CD8-positive, alpha-beta T cell (primary cell): ENCODE measurements at regions of chr6 and their contacts with region 1.

Region 1: DNA sequence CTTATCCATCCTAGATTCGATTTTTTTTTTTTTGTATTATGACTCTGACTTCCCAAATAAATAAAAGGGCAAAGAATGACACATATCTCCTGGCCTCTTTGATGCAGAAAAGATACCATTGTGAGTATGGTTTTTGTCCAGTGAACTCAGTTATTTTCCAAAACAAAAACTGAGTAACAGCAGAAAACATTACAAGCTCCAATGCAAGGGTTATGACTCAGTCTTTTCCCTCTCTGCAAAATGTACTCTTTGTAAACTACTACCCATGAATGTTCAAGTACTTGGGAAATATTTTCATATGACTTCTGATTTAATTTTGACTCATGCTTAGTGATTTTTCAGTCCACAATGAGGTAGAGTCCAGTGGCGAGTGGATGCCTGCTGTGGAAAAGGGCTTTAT is 355.3 kb downstream of the RNF144B start:
- DNase-seq: no peak
- ATAC-seq: no peak
- H3K4me3 ChIP-seq: no peak overlapping the region
- H3K4me3 Mint-ChIP-seq: no peak overlapping the region
- H3K27ac ChIP-seq: no peak overlapping the region
- H3K27ac Mint-ChIP-seq: no peak overlapping the region
- H3K4me1 ChIP-seq: no peaks in the 10 kb centered on the region
- H3K4me1 Mint-ChIP-seq: no peaks in the 10 kb centered on the region
- H3K27me3 ChIP-seq: no peaks in the 10 kb centered on the region
- H3K27me3 Mint-ChIP-seq: no peaks in the 10 kb centered on the region
- CTCF ChIP-seq: no peak

Region 2: GRCh38 chr6:18277237-18278006 is 465.0 kb before region 1 on chr6:
- CTCF ChIA-PET with region 1: no interaction called
- POLR2A ChIA-PET with region 1: no interaction called
- intact Hi-C with region 1: no loop called
- DNase-seq: no peak
- ATAC-seq: no peak
- H3K4me3 ChIP-seq: no peak overlapping the region
- H3K4me3 Mint-ChIP-seq: no peak overlapping the region
- H3K27ac ChIP-seq: no peak overlapping the region
- H3K27ac Mint-ChIP-seq: no peak overlapping the region
- H3K4me1 ChIP-seq: no peaks in the 10 kb centered on the region
- H3K4me1 Mint-ChIP-seq: peaks cover 7% of the 10 kb centered on the region
- H3K27me3 ChIP-seq: peaks cover 5 to 22% of the 10 kb centered on the region in 2 experiments
- H3K27me3 Mint-ChIP-seq: peaks cover 49% of the 10 kb centered on the region
- CTCF ChIP-seq: no peak

Region 3: DNA sequence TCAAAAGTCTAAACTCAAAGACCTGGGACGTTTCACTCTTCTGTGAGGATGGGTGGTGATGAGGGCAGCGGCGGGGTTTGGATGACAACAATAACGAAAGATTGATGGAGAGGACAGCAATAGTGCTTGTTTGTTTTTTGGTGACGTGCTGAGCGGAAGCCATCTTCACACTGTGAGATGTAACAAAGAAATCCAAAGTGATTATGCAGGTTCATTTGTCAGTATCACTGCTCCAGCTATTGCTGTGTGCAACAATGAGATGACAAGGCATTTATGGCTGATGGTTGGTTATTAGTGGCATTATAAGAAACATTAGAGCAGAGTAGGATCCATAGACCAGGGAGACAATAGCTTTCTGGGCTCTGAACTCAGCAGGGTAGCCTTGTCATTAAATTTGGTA is 48.5 kb before region 1 on chr6:
- CTCF ChIA-PET with region 1: no interaction called
- POLR2A ChIA-PET with region 1: no interaction called
- intact Hi-C with region 1: loop called in 1 of 2 experiments (anchors 2 kb)
- DNase-seq: no peak
- ATAC-seq: no peak
- H3K4me3 ChIP-seq: no peak overlapping the region
- H3K4me3 Mint-ChIP-seq: no peak overlapping the region
- H3K27ac ChIP-seq: no peak overlapping the region
- H3K27ac Mint-ChIP-seq: no peak overlapping the region
- H3K4me1 ChIP-seq: no peaks in the 10 kb centered on the region
- H3K4me1 Mint-ChIP-seq: no peaks in the 10 kb centered on the region
- H3K27me3 ChIP-seq: no peaks in the 10 kb centered on the region
- H3K27me3 Mint-ChIP-seq: no peaks in the 10 kb centered on the region
- CTCF ChIP-seq: no peak